HepG2 (cell line): ENCODE measurements at regions of chr2 and their contacts with region 1.

Region 1: GRCh38 chr2:32010670-32011484 is at the start of gene MEMO1:
- DNase-seq: peak; percentile 91
- ATAC-seq: peak; percentile 79
- H3K4me3 ChIP-seq: peak within 1 kb of the TSS; percentile 87 to 99 (median 95)
- H3K27ac ChIP-seq: peak within 1 kb of the TSS; percentile 93
- H3K4me1 ChIP-seq: peaks cover 41% of the 10 kb centered on the region
- H3K27me3 ChIP-seq: no peaks in the 10 kb centered on the region; a peak in 1 of 5 replicates
- CTCF ChIP-seq: peak; percentile 48
- EP300 ChIP-seq: peak; percentile 55 to 65
- POLR2A ChIP-seq: peak; percentile 84 to 85
- RAD21 ChIP-seq: peak; percentile 83
- total RNA-seq, gene MEMO1: 68.0 and 69.8 TPM in 2 replicates

Region 2: DNA sequence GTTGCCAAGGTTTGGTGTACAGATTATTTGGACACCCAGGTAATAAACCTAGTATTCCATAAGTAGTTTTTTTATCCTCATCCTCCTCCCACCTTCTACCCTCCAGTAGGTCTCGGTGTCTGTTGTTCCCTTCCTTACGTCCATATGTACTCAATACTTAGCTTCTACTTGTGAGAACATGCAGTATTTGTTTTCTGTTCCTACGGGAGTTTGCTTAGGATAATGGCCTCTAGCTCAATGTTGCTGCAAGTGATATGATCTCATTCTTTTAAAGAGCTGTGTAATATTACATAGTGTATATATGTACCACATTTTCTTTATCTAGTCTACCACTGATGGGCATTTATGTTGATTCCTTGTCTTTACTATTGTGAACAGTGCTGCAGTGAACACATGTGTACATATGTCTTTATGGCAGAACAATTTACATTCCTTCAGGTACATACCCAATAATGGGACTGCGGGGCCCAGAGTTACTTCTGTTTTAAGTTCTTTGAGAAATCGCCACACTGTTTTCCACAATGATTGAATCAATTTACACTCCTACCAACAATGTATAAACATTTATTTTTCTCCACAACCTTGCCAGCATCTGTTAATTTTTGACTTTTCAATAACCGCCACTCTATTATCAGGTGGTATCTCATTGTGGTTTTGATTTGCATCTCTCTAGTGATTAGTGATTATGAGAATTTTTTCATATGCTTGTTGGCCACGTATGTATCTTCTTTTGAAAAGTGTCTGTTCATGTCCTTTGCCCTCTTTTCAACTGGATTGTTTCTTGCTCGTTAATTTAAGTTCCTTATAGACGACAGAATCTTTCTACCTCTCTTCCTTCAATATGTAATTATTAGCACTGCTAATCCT is 88.1 kb before region 1 on chr2:
- CTCF ChIA-PET with region 1: no interaction called
- POLR2A ChIA-PET with region 1: no interaction called
- in situ Hi-C with region 1: no loop called
- intact Hi-C with region 1: loop called (anchors 5 kb)
- DNase-seq: no peak
- ATAC-seq: no peak
- H3K4me3 ChIP-seq: no peak overlapping the region
- H3K27ac ChIP-seq: no peak overlapping the region
- H3K4me1 ChIP-seq: peaks cover 26% of the 10 kb centered on the region
- H3K27me3 ChIP-seq: no peaks in the 10 kb centered on the region
- CTCF ChIP-seq: no peak
- EP300 ChIP-seq: no peak
- POLR2A ChIP-seq: no peak
- RAD21 ChIP-seq: no peak

Region 3: DNA sequence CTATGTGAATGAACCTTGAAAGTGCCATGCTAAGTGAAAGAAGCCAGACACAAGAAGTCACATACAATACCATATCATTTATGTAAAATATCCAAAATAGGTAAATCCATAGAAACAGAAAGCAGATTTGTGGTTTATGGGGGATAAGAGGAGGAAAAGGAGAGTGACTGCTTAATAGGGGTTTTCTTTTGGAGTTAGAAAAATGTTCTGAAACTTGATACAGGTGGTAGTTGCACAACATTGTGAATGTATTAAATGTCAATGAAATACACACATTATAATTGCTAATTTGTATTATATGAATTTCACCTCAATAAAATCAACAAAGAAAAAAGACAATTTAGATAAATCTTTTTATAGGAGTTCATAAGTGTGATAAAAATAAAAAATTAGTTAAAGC is 37.2 kb before region 1 on chr2:
- CTCF ChIA-PET with region 1: no interaction called
- POLR2A ChIA-PET with region 1: no interaction called
- in situ Hi-C with region 1: no loop called
- intact Hi-C with region 1: loop called (anchors 5 kb)
- DNase-seq: no peak
- ATAC-seq: no peak
- H3K4me3 ChIP-seq: no peak overlapping the region
- H3K27ac ChIP-seq: no peak overlapping the region
- H3K4me1 ChIP-seq: no peaks in the 10 kb centered on the region
- H3K27me3 ChIP-seq: no peaks in the 10 kb centered on the region; a peak in 1 of 5 replicates
- CTCF ChIP-seq: no peak
- EP300 ChIP-seq: no peak
- POLR2A ChIP-seq: no peak
- RAD21 ChIP-seq: no peak

Region 4: GRCh38 chr2:32039447-32040219 is 28.8 kb after region 1 on chr2 and contains the start of gene DPY30:
- CTCF ChIA-PET with region 1: no interaction called
- POLR2A ChIA-PET with region 1: interaction called, 14 read pairs
- in situ Hi-C with region 1: no loop called
- intact Hi-C with region 1: loop called (anchors 2 kb)
- DNase-seq: peak; percentile 91
- ATAC-seq: peak; percentile 95
- H3K4me3 ChIP-seq: peak within 1 kb of the TSS; percentile 72 to 96 (median 84)
- H3K27ac ChIP-seq: peak within 1 kb of the TSS; percentile 65
- H3K4me1 ChIP-seq: peaks cover 21% of the 10 kb centered on the region
- H3K27me3 ChIP-seq: no peaks in the 10 kb centered on the region; a peak in 1 of 5 replicates
- CTCF ChIP-seq: peak; percentile 60
- EP300 ChIP-seq: 0 out of 4 replicates have a peak, but pooled peaks of 1 of the 2 experiments have one; percentile 21
- POLR2A ChIP-seq: peak; percentile 98 to 100
- RAD21 ChIP-seq: peak; percentile 47
- total RNA-seq, gene DPY30: 118 and 165 TPM in 2 replicates

Region 5: DNA sequence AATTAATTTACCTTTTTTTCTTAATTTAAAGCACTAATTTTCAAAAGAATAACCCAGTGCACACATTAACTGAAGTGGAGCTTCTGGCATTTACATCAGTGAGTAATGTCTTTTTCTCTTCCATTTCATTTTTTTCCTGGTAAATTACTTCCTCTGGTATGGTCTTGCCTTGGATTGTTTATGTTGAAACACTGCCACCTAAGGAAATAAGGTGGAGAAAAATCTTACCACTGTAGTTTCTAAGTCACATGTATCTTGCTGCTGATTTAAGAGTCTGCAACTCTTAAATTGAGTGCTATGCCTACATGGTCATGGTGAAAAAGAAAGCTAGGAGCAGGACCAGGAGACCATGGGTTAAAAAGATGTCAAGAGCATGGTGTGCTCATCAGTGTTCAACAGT is 667.9 kb after region 1 on chr2:
- CTCF ChIA-PET with region 1: no interaction called
- POLR2A ChIA-PET with region 1: no interaction called
- in situ Hi-C with region 1: no loop called
- intact Hi-C with region 1: no loop called
- DNase-seq: no peak
- ATAC-seq: no peak
- H3K4me3 ChIP-seq: no peak overlapping the region
- H3K27ac ChIP-seq: no peak overlapping the region
- H3K4me1 ChIP-seq: no peaks in the 10 kb centered on the region
- H3K27me3 ChIP-seq: no peaks in the 10 kb centered on the region
- CTCF ChIP-seq: no peak
- EP300 ChIP-seq: no peak
- POLR2A ChIP-seq: no peak
- RAD21 ChIP-seq: no peak